ENCODE measurements at regions of chr2 and their contacts with region 1.

Region 1: DNA sequence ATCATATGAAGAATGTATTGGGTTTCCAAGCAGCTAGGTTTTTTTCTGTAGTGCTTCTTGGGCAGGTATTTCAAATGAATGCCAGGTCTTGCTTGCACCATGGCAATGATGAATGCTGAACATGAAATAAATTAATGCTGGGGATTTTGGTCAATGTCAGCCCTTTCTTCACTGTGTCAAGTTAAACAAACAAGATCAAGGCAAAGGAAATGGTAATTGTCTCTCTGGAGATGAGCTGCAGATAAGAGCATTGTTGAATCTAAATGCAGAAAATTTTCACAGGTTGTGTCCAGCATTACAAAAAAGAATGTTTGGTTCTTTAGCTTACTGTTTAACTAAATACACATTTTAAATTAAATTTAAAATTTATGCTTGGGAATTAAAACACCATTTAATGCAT is 144.3 kb downstream of the GPD2 start:
- DNase-seq: no peak
- H3K4me3 ChIP-seq: no peak overlapping the region
- H3K27ac ChIP-seq: no peak overlapping the region
- H3K4me1 ChIP-seq: no peaks in the 10 kb centered on the region
- H3K27me3 ChIP-seq: no peaks in the 10 kb centered on the region
- CTCF ChIP-seq: no peak
- POLR2A ChIP-seq: no peak

Region 2: DNA sequence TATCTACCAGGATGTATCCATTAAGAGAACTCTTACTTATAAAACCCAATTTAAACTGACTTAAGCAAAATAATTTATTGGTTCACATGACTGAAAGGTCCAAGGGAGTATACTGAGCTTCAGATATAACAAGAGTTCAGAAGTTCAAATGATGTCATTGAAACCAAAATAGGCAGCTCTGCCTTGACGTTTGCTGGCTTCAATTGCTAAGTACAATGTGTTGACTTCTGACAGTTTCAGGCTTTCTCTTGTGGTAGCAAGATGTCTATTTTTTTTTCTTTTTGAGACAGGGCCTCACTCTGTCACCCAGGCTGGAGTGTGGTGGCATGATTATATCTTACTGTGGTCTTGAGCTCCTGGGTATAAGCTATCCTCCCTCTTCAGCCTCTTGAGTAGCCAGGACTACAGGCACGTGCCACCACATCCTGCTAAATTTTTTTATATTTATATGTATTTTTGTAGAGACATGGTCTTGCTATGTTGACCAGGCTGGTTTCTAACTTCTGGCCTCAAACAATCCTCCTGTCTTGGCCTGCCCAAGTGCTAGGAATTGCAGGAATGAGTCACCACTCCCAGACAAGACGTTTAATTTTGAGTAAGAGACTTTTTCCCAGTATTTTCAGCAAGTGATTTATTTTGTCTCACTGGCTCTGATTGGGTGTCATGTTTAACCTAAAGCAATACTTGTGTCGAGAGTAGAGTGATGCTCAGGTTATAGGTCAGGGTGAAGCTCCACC is 432.7 kb before region 1 on chr2:
- CTCF ChIA-PET with region 1: no interaction called
- POLR2A ChIA-PET with region 1: no interaction called
- dilution Hi-C with region 1: no loop called
- intact Hi-C with region 1: no loop called
- DNase-seq: no peak
- H3K4me3 ChIP-seq: no peak overlapping the region
- H3K27ac ChIP-seq: no peak overlapping the region
- H3K4me1 ChIP-seq: no peaks in the 10 kb centered on the region
- H3K27me3 ChIP-seq: no peaks in the 10 kb centered on the region
- CTCF ChIP-seq: no peak
- POLR2A ChIP-seq: no peak

Region 3: DNA sequence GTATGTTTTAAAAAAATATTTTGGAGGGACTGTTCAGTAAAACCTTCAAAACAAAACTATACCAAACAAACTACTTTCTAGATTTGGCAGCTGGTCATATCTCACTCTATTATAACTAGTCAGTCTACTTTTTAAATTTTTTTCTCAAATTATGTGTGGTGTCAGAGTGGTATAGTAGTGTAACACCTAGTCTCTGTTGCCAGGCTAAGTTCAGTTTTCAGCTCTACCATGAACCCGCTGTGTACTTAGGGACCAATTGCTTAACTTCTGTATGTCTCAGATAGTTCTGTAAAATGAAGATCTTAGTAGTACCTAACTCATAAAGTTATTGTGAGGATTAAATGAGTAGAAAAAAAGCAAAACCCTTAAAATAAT is 90.0 kb before region 1 on chr2:
- CTCF ChIA-PET with region 1: no interaction called
- POLR2A ChIA-PET with region 1: no interaction called
- dilution Hi-C with region 1: no loop called
- intact Hi-C with region 1: loop called (anchors 5 kb)
- DNase-seq: no peak
- H3K4me3 ChIP-seq: no peak overlapping the region
- H3K27ac ChIP-seq: no peak overlapping the region
- H3K4me1 ChIP-seq: no peaks in the 10 kb centered on the region
- H3K27me3 ChIP-seq: no peaks in the 10 kb centered on the region
- CTCF ChIP-seq: no peak
- POLR2A ChIP-seq: no peak

Region 4: DNA sequence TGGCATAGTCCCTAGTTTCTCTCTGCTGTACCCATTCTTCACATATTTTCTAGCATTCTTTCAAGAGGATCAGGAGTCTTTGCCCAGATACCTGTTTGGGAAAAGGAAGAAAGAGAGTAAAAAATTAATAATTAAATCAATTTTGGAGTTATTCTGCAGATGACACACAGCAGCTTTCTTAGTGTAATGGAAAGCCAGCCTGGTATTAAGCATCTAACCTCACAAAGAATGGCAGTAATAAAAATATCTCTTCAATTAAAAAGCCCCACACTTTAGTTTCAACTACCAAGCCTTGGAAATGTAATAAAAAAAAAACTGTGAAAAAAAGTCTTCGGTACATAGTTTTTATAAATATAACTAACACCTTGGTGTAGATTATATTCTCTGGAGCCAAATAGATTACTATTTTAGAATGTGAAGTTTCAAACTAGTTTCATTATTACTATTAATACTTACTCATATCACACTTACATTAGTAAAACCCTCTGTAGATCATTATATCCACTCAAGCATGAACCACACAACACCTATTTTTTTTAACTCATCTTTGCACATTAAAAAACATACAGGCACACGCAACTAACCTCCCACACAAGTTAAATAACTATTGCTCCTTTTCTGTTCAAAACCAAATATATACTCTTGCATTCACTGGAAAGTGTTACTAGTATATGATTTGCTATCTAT is 53.4 kb before region 1 on chr2:
- CTCF ChIA-PET with region 1: no interaction called
- POLR2A ChIA-PET with region 1: no interaction called
- dilution Hi-C with region 1: no loop called
- intact Hi-C with region 1: no loop called
- DNase-seq: no peak
- H3K4me3 ChIP-seq: no peak overlapping the region
- H3K27ac ChIP-seq: no peak overlapping the region
- H3K4me1 ChIP-seq: no peaks in the 10 kb centered on the region
- H3K27me3 ChIP-seq: no peaks in the 10 kb centered on the region
- CTCF ChIP-seq: no peak
- POLR2A ChIP-seq: no peak

Measured in endothelial cell of umbilical vein (primary cell).